Endothelial cell of umbilical vein (primary cell): ENCODE measurements at regions of chr19 and their contacts with region 1.

Region 1: DNA sequence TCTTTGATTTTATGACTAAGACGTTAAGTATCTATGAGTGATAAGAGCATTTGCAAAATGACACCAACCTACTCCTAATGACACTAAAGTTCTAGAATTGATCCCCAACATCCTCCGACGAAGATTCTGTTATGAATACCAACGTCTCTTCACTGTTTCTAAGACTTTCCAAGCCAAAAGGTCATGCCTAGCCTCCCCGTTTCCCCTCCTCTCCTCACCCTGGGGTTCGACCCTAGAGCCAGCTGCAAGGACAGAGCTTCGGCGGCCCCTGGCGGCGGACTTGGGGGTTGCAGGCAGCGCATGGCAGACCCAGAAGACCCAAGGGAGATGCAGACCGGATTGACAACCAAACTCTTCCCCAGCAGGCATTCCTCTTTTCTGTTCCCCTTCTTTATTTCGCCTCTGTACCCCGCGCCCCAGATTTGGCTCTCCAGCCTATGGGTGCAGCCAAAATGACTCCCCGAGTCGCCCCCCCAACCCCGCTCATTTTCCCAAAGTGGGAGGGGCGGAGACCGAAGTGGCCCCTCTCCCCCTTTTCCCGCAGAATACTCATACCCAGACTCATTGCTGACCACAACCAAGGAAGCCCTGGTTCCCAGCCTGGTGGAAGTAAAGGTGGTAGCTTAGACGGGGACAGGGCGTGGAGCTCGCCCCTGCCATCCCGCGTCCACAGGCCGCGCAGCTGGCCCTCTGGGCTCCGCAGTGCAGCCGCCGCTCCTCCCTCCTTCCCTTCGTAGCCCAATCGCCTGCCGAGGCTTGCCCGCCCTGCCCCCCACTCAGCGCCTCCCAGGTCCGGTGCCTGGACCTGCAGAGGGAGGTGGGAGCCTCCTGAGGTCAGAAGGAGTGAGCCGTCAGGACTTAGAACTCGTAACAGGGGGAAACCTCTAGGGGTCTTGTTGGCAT is 4.1 kb upstream of the EML2 start:
- DNase-seq: peak; percentile 85
- H3K4me3 ChIP-seq: peak overlapping the region in 1 of 3 experiments; percentile 13
- H3K27ac ChIP-seq: peak overlapping the region; percentile 9
- H3K4me1 ChIP-seq: peaks cover 42% of the 10 kb centered on the region
- H3K27me3 ChIP-seq: no peaks in the 10 kb centered on the region
- CTCF ChIP-seq: peak; percentile 98 to 99
- POLR2A ChIP-seq: no peak

Region 2: DNA sequence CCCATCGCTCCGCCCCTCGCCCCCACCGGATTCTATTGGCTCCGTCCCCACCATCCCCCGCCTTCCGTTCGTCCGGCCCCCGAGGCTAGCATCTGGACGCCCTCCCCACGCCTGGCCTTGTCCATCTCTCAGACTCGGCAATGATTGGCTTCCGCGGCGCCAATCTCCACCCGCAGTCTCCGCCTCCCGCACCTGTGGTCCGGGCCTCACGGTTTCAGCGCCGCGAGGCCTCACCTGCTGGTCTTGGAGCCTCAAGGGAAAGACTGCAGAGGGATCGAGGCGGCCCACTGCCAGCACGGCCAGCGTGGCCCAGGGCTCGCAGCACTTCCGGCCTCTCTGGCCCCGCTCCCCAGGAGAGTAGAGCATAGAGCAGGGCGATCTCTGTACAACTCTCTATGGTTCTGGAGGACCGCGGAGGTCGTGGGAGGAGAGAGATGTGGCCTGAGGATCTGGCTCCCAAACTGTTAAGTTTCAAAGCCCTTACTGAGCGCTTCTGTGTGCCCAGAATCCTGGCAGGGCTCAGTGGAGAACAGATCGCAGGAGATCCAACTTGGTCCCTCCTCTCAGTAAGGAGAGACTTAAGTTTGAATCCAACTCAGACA is 219.6 kb before region 1 on chr19 and contains the start of gene ERCC1:
- CTCF ChIA-PET with region 1: interaction called, 6 read pairs
- POLR2A ChIA-PET with region 1: no interaction called
- dilution Hi-C with region 1: no loop called
- intact Hi-C with region 1: loop called (anchors 5 kb)
- DNase-seq: peak; percentile 94
- H3K4me3 ChIP-seq: peak within 1 kb of the TSS; percentile 59 to 74 (median 73)
- H3K27ac ChIP-seq: peak within 1 kb of the TSS; percentile 100
- H3K4me1 ChIP-seq: peaks cover 30% of the 10 kb centered on the region
- H3K27me3 ChIP-seq: no peaks in the 10 kb centered on the region
- CTCF ChIP-seq: no peak
- POLR2A ChIP-seq: peak; percentile 61
- total RNA-seq, gene ERCC1: 81.8 and 82.6 TPM in 2 replicates

Region 3: DNA sequence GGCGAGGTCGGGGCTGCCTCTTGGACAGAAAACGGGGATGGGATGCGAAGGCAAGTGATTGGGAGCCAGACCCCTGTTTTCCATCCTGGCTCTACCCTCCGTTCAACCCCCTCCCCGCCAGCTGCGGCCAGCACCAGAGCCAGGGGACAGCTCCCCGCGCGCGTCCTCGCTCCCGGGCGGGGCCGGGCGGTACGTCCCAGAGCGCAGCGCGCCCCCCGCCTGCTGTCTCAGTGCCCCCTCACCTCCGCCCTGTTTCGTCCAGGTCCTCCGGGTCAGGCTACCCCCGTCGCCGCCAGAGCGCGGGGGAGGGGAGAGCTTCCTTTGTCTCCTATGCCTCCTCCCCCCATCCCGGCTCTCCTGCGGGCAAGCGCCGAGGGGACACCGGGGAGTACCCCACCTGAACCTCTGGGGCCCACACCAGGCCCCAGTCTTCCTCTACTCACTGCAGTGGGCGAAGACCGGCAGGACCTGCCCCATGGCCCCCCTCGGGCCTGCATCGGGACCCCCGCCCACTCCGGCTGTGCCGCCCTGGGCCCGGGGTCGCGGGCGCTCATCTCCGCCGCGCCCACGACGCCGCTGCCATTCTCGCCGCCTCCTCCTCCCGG is 146.8 kb before region 1 on chr19:
- CTCF ChIA-PET with region 1: interaction called, 45 read pairs
- POLR2A ChIA-PET with region 1: no interaction called
- dilution Hi-C with region 1: no loop called
- intact Hi-C with region 1: loop called (anchors 1 kb)
- DNase-seq: peak; percentile 29
- H3K4me3 ChIP-seq: peak overlapping the region; percentile 31 to 55 (median 40)
- H3K27ac ChIP-seq: no peak overlapping the region
- H3K4me1 ChIP-seq: peaks cover 27% of the 10 kb centered on the region
- H3K27me3 ChIP-seq: peaks cover 8 to 16% of the 10 kb centered on the region in 2 experiments
- CTCF ChIP-seq: no peak
- POLR2A ChIP-seq: no peak

Region 4: GRCh38 chr19:45558399-45558878 is 84.8 kb before region 1 on chr19:
- CTCF ChIA-PET with region 1: interaction called, 36 read pairs
- POLR2A ChIA-PET with region 1: no interaction called
- dilution Hi-C with region 1: no loop called
- intact Hi-C with region 1: no loop called
- DNase-seq: peak; percentile 46
- H3K4me3 ChIP-seq: no peak overlapping the region
- H3K27ac ChIP-seq: no peak overlapping the region
- H3K4me1 ChIP-seq: no peaks in the 10 kb centered on the region
- H3K27me3 ChIP-seq: no peaks in the 10 kb centered on the region
- CTCF ChIP-seq: peak; percentile 70 to 78
- POLR2A ChIP-seq: no peak

Region 5: DNA sequence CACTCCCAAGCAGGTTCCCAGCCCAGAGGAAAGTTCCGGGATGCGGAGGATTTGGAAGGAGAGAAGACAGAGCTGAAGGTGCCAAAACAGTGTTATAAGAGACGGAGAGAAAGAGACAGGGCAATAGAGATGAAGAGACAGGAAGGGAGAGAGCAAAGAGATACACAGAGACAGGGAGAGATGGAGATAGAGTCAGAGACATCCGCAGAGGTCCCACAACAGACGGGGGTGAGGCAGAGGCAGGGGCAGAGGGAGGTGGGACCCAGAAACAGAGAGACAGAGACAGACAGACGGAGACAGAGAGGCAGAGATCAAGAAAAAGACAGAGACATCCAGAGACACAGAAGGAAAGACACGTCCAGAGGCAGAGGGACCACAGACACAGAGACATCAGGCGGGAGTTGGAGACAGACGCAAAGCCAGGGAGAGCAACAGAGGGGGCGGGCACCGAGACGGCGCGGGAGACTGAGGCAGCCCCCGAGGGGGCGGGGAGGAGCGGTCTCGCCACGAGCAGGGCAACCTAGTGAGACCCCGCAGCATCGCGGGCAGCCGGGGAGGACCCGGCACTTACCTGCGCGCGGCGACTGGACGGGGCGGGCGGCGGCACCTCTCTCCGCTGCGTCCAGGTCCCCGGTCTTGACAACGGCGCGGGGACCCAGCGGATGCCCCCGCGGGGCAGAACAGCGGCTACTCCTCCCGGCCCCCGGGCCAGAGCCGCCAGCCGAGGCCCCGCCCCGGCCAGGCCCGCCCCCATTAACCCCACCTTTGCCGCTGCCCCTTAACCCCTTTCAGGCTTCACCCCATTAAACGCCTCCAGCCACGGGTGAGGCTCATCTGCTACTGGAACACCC is 41.5 kb before region 1 on chr19 and contains the start of gene GPR4:
- CTCF ChIA-PET with region 1: interaction called, 81 read pairs
- POLR2A ChIA-PET with region 1: no interaction called
- dilution Hi-C with region 1: no loop called
- intact Hi-C with region 1: no loop called
- DNase-seq: no peak
- H3K4me3 ChIP-seq: peak within 1 kb of the TSS; percentile 53 to 84 (median 80)
- H3K27ac ChIP-seq: peak within 1 kb of the TSS; percentile 9
- H3K4me1 ChIP-seq: peaks cover 52% of the 10 kb centered on the region
- H3K27me3 ChIP-seq: no peaks in the 10 kb centered on the region
- CTCF ChIP-seq: no peak
- POLR2A ChIP-seq: peak; percentile 59
- total RNA-seq, gene GPR4: 26.7 and 30.3 TPM in 2 replicates

Region 6: GRCh38 chr19:45632468-45633196 is 10.6 kb before region 1 on chr19:
- CTCF ChIA-PET with region 1: interaction called, 49 read pairs
- POLR2A ChIA-PET with region 1: no interaction called
- dilution Hi-C with region 1: no loop called
- intact Hi-C with region 1: loop called (anchors 1 kb)
- DNase-seq: peak; percentile 80
- H3K4me3 ChIP-seq: peak overlapping the region in 1 of 3 experiments; percentile 13
- H3K27ac ChIP-seq: no peak overlapping the region
- H3K4me1 ChIP-seq: peaks cover 8% of the 10 kb centered on the region
- H3K27me3 ChIP-seq: no peaks in the 10 kb centered on the region
- CTCF ChIP-seq: no peak
- POLR2A ChIP-seq: no peak

Region 7: GRCh38 chr19:45886427-45887199 is 243.3 kb after region 1 on chr19:
- CTCF ChIA-PET with region 1: no interaction called
- POLR2A ChIA-PET with region 1: no interaction called
- dilution Hi-C with region 1: no loop called
- intact Hi-C with region 1: no loop called
- DNase-seq: peak; percentile 92
- H3K4me3 ChIP-seq: peak overlapping the region; percentile 48 to 94 (median 57)
- H3K27ac ChIP-seq: peak overlapping the region; percentile 80
- H3K4me1 ChIP-seq: peaks cover 10% of the 10 kb centered on the region
- H3K27me3 ChIP-seq: no peaks in the 10 kb centered on the region
- CTCF ChIP-seq: no peak
- POLR2A ChIP-seq: peak; percentile 83